ENCODE measurements at regions of chr6 and their contacts with region 1.

Region 1: DNA sequence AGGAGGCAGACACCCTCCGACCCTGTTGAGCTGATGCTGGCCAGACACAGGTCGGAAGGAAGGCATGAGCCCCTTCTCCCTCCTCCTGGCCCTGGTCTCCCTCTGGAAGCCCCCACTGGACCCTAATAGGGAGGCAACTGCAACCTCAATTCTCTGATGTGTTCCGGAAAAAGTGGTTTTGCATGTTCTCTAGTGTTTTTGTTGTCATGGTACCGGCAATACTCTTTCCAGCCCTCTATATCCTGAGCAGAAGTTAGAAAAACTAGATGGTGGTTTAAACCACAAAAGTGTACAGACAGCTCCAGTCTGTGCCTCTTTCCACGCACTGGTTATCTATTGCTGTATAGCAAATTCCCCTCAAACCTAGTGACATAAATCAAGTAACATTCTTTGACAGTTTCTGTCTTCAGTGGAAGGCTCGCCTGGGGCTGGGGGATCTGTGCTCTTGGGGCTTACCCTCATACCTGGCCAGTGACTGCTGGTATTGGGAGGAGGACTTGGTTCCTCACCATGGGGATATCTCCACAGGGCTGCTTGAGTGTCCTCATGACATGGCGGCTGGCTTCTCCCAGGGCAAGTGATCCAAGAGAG is 37.0 kb downstream of the SYTL3 start:
- DNase-seq: peak; percentile 92 to 98 (median 97)
- H3K4me3 ChIP-seq: peak overlapping the region in 5 of 7 experiments; percentile 0 to 64 (median 35)
- H3K27ac ChIP-seq: peak overlapping the region; percentile 62 to 86
- H3K4me1 ChIP-seq: peaks cover 14 to 35% (median 33%) of the 10 kb centered on the region in 4 experiments
- H3K27me3 ChIP-seq: no peaks in the 10 kb centered on the region

Region 2: GRCh38 chr6:158631678-158632537 is 55.0 kb before region 1 on chr6:
- CTCF ChIA-PET with region 1: interaction called, 12 read pairs
- POLR2A ChIA-PET with region 1: no interaction called
- DNase-seq: peak in 2 of 3 donors; percentile 39 to 45
- H3K4me3 ChIP-seq: no peak overlapping the region
- H3K27ac ChIP-seq: peak overlapping the region in 1 of 2 experiments; percentile 52
- H3K4me1 ChIP-seq: peaks cover 0 to 11% (median 0%) of the 10 kb centered on the region in 4 experiments
- H3K27me3 ChIP-seq: no peaks in the 10 kb centered on the region

Region 3: DNA sequence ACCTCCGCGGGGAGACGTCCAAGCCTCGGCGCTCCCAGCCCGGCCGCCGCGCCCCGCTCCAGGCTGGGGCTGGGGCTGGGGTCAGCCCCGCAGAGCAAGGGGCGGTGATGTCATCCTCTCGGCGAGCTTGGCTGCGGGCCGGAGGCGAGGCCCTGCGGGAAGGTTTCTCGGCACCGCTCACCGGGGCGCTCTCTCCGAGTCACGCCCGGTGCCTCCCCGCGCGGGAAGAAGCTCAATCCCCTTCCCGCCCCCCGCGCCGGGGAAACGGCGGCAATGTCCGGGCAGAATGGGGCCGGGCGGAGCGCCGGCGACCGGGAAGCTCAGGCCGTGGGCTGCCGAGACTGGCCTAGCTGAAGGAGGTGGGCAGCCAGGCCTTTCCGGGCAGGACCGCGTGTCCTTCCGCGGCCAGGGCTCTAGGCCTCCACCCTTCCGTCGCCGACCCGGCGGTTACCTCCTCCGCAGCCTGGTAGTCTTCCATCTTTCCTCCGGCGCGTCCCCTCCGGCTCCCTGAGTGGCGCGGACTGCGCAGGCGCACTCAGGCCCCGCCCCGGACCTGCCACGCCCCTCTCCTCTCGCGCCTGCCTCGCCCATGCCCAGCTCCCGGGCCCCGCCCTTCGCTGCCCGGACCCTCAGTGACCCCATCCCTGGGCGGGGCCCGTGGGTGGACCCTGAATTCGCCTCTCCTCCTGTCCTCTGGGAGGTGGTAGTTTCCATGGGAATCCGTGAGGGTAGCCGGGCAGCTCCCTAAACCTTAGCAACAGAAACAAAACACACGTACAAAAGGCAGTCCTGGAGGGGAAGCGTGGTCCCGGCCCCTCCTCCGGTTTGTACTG is 42.4 kb before region 1 on chr6 and contains the start of gene DYNLT1:
- CTCF ChIA-PET with region 1: interaction called, 13 read pairs
- POLR2A ChIA-PET with region 1: interaction called, 6 read pairs
- DNase-seq: peak; percentile 78 to 92 (median 90)
- H3K4me3 ChIP-seq: peak within 1 kb of the TSS; percentile 73 to 96 (median 90)
- H3K27ac ChIP-seq: peak within 1 kb of the TSS; percentile 82 to 89
- H3K4me1 ChIP-seq: peaks cover 6 to 32% (median 27%) of the 10 kb centered on the region in 4 experiments
- H3K27me3 ChIP-seq: no peaks in the 10 kb centered on the region

Region 4: DNA sequence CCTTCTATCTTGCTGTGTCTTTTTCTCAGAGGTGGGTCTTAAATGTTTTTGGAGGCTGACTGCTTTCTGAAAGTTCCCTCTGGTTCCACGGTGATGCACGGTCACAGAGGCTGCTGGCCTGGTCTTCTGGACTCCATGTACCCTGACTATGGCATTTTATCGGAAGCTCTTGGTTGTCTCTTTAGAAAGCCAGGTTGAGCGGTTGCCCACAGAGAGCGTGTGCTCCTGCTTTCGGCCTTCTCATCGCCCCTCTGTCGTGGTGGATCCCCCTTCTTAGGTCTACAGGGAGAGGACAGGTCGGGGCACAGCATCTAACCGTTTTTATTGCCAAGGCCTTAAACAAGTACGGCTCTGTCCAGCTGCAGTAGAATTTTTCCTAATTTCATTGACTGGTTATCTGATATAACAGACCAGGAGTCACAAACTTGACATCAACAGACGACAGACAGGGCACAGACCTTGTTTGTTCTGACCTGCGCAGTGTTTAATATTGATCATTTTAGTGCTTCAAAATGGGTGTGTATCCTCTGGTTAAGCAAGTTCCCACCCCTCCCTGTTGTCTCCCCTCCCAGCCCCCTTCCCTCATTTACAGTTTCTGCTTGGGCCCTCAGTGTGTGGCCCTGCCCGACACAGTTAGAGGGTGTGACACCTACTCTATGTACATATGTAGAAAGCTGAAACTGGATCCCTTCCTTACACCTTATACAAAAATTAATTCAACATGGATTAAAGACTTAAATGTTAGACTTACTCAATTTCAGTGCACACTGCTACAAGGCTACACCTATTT is 12.3 kb before region 1 on chr6:
- CTCF ChIA-PET with region 1: interaction called, 10 read pairs
- POLR2A ChIA-PET with region 1: no interaction called
- DNase-seq: no peak
- H3K4me3 ChIP-seq: no peak overlapping the region
- H3K27ac ChIP-seq: no peak overlapping the region
- H3K4me1 ChIP-seq: no peaks in the 10 kb centered on the region
- H3K27me3 ChIP-seq: no peaks in the 10 kb centered on the region

Region 5: GRCh38 chr6:159819932-159820640 is 1133.2 kb after region 1 on chr6:
- CTCF ChIA-PET with region 1: no interaction called
- POLR2A ChIA-PET with region 1: no interaction called
- DNase-seq: peak; percentile 38 to 87 (median 82)
- H3K4me3 ChIP-seq: peak overlapping the region in 6 of 7 experiments; percentile 8 to 66 (median 18)
- H3K27ac ChIP-seq: peak overlapping the region in 1 of 2 experiments; percentile 45
- H3K4me1 ChIP-seq: peaks cover 8 to 53% (median 45%) of the 10 kb centered on the region in 4 experiments
- H3K27me3 ChIP-seq: no peaks in the 10 kb centered on the region

Measured in common myeloid progenitor, CD34-positive (primary cell).